Mammary epithelial cell (primary cell): ENCODE measurements at regions of chr12 and their contacts with region 1.

Region 1: DNA sequence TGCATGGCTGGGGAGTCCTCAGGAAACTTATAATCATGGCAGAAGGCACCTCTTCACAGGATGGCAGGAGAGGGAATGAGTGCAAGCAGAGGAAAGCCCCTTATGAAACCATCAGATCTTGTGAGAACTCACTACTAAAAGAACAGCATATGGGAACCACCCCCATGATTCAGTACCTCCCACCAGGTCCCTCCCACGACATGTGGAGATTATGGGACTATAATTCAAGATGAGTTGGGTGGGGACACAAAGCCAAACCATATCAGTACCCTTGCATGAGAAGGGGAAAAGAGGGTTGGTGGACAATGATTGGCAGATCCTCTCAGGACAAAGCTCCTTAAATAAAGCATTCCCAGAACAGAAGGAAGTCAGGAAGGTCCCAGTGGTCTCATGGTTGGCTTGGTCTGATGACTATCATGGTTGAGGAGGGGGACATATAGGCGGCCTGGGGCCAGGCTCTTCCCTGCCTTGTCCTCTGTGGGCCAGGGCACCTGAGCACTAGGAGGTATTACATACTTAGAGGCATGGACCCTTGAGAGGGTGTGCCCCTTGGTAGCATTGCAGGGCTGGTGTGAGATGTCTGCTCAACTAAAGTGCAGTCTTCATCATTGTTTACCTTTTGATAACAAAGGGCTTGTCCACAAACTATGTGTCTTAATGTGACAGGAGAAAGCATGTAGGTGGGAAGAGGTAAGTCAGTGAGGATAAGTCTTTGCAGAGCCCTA is 22.2 kb downstream of the HSD17B6 start:
- DNase-seq: no peak
- H3K4me3 ChIP-seq: no peak overlapping the region
- H3K27ac ChIP-seq: no peak overlapping the region
- H3K4me1 ChIP-seq: peaks cover under 1% of the 10 kb centered on the region
- H3K27me3 ChIP-seq: no peaks in the 10 kb centered on the region
- CTCF ChIP-seq: no peak

Region 2: GRCh38 chr12:56878010-56878339 is 92.7 kb after region 1 on chr12:
- CTCF ChIA-PET with region 1: no interaction called
- dilution Hi-C with region 1: loop called (anchors 5 kb)
- in situ Hi-C with region 1: no loop called
- intact Hi-C with region 1: no loop called
- DNase-seq: no peak
- H3K4me3 ChIP-seq: no peak overlapping the region
- H3K27ac ChIP-seq: no peak overlapping the region
- H3K4me1 ChIP-seq: peaks cover 7% of the 10 kb centered on the region
- H3K27me3 ChIP-seq: no peaks in the 10 kb centered on the region
- CTCF ChIP-seq: no peak